ENCODE measurements at regions of chr12 and their contacts with region 1.

Region 1: GRCh38 chr12:51961834-51962233 is 10.3 kb downstream of the ACVR1B start:
- ATAC-seq: peak in 1 of 8 experiments; percentile 18
- H3K4me3 ChIP-seq: no peak overlapping the region
- H3K27ac ChIP-seq: no peak overlapping the region
- H3K4me1 ChIP-seq: peaks cover 0 to 3% of the 10 kb centered on the region in 2 donors

Region 2: DNA sequence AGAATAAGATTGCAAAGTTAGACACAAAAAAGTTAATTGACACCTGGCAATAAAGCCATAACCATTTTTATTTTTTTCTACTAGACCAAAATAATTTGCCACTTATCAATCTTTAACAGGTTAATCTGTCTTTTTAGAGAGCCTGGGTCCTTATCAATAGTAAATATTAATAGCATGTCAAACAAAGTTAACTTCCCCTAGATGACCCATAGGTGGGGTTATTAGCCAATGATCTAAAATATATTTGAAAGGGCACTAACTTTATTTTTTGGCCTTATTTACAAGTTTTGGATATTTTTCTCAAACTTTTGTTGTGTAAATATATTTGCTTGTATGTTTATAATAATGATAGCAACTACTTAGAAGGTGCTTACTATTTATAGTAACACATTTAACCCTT is 70.0 kb before region 1 on chr12:
- in situ Hi-C with region 1: loop called in 1 of 9 experiments (anchors 10 kb)
- ATAC-seq: no peak
- H3K4me3 ChIP-seq: no peak overlapping the region
- H3K27ac ChIP-seq: no peak overlapping the region
- H3K4me1 ChIP-seq: peaks cover 0 to 6% of the 10 kb centered on the region in 2 donors

Region 3: DNA sequence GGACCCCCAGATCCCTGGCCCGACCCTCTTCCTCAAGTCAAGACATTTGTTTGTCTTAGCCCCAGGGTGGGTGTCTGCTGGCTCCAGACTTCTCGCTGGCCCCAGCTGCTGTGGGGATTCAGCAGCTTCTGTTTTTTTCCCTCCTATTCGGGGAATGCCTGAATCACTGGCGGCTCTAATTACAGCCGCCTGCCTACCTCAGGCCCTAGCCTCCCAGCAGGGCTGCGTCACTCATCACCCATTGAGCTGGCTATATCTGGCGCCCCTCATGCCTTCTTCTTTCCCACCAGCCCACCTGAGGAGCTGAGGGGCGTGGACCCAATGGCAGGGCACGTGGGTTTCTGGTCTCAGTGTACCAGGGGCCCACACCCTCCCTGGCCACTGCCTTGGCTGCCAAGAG is 219.9 kb after region 1 on chr12:
- in situ Hi-C with region 1: no loop called
- ATAC-seq: peak; percentile 67 to 86 (median 82)
- H3K4me3 ChIP-seq: no peak overlapping the region
- H3K27ac ChIP-seq: no peak overlapping the region
- H3K4me1 ChIP-seq: peaks cover 0 to 7% of the 10 kb centered on the region in 2 donors